Left ventricle myocardium inferior (tissue), 1 donor: ENCODE measurements at regions of chrX and their contacts with region 1.

Region 1: GRCh38 chrX:101595739-101596419 is 21.9 kb downstream of the ARMCX6 start:
- DNase-seq: no peak
- H3K4me3 ChIP-seq: no peak overlapping the region
- H3K27ac ChIP-seq: no peak overlapping the region
- H3K4me1 ChIP-seq: no peaks in the 10 kb centered on the region
- H3K27me3 ChIP-seq: peaks cover 16% of the 10 kb centered on the region
- CTCF ChIP-seq: peak; percentile 64

Region 2: GRCh38 chrX:101051549-101052302 is 544.2 kb before region 1 on chrX and contains the start of gene TRMT2B:
- intact Hi-C with region 1: no loop called
- DNase-seq: peak; percentile 79
- H3K4me3 ChIP-seq: peak within 1 kb of the TSS; percentile 76
- H3K27ac ChIP-seq: peak within 1 kb of the TSS; percentile 92
- H3K4me1 ChIP-seq: peaks cover 7% of the 10 kb centered on the region
- H3K27me3 ChIP-seq: no peaks in the 10 kb centered on the region
- CTCF ChIP-seq: no peak
- total RNA-seq, gene TRMT2B: 17.3 TPM

Region 3: GRCh38 chrX:101759000-101759399 is 163.1 kb after region 1 on chrX:
- intact Hi-C with region 1: no loop called
- DNase-seq: peak; percentile 9
- H3K4me3 ChIP-seq: no peak overlapping the region
- H3K27ac ChIP-seq: no peak overlapping the region
- H3K4me1 ChIP-seq: no peaks in the 10 kb centered on the region
- H3K27me3 ChIP-seq: no peaks in the 10 kb centered on the region
- CTCF ChIP-seq: peak; percentile 58

Region 4: GRCh38 chrX:101799387-101799786 is 203.5 kb after region 1 on chrX:
- intact Hi-C with region 1: loop called (anchors 5 kb)
- DNase-seq: peak; percentile 65
- H3K4me3 ChIP-seq: peak overlapping the region; percentile 49
- H3K27ac ChIP-seq: no peak overlapping the region
- H3K4me1 ChIP-seq: peaks cover 3% of the 10 kb centered on the region
- H3K27me3 ChIP-seq: no peaks in the 10 kb centered on the region
- CTCF ChIP-seq: peak; percentile 74

Region 5: DNA sequence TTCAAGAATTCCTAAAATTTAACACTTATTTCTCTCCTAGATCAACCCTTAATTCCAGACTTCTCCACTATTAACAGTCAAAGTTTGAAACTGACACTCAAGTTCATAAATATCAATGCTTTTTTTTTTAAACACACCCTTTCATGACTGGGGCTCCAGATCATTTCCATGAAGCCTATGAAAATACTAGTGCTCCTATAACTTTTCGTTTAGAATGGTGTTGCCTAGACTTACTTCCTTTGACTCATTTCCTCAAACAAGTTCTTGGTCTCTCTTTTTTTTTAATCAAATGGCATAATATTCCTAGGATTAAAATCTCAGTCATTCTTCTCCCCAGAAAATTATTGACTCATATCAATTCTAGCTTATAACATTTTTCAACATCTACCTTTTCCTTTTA is 322.9 kb after region 1 on chrX:
- intact Hi-C with region 1: no loop called
- DNase-seq: no peak
- H3K4me3 ChIP-seq: no peak overlapping the region
- H3K27ac ChIP-seq: no peak overlapping the region
- H3K4me1 ChIP-seq: no peaks in the 10 kb centered on the region
- H3K27me3 ChIP-seq: no peaks in the 10 kb centered on the region
- CTCF ChIP-seq: no peak